Mucosa of descending colon (tissue), 3 donors: ENCODE measurements at regions of chr1 and their contacts with region 1.

Region 1: DNA sequence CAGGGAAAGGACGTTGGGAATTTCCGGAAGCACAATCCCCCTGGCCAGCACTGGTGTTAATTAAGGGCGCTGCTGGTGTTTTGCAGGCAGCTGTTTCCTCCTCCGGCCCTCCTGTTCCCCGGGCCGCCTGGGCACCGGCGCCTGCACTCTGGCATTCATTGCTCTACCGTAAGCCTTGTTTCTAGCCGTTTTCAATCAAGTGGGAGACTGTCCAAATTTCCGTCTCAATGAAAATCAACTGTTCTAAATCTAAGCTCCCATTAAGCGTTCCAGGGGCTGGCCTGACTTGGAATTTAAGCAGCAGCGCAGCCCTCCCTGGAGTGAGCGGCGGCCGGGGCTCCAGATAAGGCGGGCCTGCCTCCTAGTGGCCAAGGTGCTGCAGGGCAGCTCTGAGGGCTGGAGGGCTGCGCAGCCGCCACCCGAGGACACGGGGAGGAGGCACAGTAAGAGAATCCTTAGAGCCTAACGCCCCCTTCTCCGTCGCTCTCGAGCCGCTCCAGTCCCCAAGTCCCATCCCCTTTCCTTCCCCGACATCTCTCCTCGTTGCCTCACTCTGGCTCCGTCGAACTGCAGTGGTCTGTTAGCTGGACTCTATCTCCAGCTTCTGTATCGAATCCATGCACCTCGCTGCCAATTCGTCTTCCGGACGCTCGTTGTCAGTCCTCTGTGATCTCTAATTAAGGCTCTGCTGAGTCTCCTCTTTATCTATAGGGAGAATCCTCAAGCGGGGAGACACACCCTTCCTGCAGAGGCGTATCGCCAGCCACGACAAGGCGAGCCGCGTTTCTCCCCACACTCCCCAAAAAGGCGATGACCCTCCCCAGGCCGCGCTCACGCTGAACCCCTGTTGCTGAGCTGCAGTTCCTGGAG is 57.8 kb upstream of the LRRC8D start:
- DNase-seq: peak; percentile 89 to 90 (median 90)
- ATAC-seq: peak; percentile 99
- H3K4me3 ChIP-seq: no peak overlapping the region
- H3K4me1 ChIP-seq: no peaks in the 10 kb centered on the region
- CTCF ChIP-seq: peak; percentile 99

Region 2: DNA sequence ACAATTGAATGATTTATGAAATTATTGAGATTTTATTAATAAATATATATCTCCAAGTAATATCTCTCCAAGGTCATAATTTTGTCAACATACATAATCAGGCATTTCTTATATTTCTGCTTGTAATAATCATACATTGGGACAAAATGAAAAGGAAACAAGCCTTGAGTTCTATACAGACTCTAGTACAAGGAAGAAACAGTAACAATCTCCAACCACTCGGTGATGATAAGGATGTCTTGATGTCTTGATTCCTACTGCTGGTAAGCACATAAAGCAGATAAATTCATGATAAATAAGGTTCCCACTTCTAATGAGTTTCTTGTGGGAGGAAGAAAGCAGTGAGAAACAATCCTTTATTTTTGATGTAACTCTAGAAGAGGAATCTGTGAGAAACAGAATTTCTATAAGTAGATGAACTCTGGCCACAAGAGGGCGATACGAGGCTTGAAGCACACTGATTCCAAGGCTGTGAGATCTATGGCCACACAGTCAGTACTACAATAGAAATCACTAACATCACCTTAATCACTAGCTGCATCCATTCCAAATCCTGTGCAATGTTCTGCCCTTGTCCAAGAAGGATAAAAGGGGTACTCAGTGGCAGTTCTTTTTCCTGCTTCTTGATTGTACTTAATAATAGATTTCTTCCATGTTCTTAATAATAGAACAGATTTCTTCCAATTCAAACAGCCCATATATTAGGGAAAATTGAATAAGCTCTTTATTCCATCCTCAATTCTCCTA is 279.8 kb before region 1 on chr1:
- intact Hi-C with region 1: loop called in 1 of 2 experiments (anchors 5 kb)
- DNase-seq: peak in 2 of 3 donors; percentile 39 to 96
- ATAC-seq: peak; percentile 83
- H3K4me3 ChIP-seq: no peak overlapping the region
- H3K4me1 ChIP-seq: no peaks in the 10 kb centered on the region
- CTCF ChIP-seq: peak; percentile 25

Region 3: GRCh38 chr1:89632657-89633247 is 130.3 kb before region 1 on chr1 and contains the start of gene LRRC8C:
- intact Hi-C with region 1: loop called in 1 of 2 experiments (anchors 10 kb)
- DNase-seq: peak; percentile 73 to 90 (median 86)
- ATAC-seq: peak; percentile 94
- H3K4me3 ChIP-seq: peak within 1 kb of the TSS; percentile 46
- H3K4me1 ChIP-seq: peaks cover 6% of the 10 kb centered on the region
- CTCF ChIP-seq: peak; percentile 39
- total RNA-seq, gene LRRC8C: 1.5 to 5.0 (median 3.0) TPM

Region 4: GRCh38 chr1:89657886-89658285 is 105.1 kb before region 1 on chr1:
- intact Hi-C with region 1: no loop called
- DNase-seq: no peak
- ATAC-seq: peak; percentile 47
- H3K4me3 ChIP-seq: no peak overlapping the region
- H3K4me1 ChIP-seq: no peaks in the 10 kb centered on the region
- CTCF ChIP-seq: no peak